ENCODE measurements at regions of chr2 and their contacts with region 1.

Region 1: DNA sequence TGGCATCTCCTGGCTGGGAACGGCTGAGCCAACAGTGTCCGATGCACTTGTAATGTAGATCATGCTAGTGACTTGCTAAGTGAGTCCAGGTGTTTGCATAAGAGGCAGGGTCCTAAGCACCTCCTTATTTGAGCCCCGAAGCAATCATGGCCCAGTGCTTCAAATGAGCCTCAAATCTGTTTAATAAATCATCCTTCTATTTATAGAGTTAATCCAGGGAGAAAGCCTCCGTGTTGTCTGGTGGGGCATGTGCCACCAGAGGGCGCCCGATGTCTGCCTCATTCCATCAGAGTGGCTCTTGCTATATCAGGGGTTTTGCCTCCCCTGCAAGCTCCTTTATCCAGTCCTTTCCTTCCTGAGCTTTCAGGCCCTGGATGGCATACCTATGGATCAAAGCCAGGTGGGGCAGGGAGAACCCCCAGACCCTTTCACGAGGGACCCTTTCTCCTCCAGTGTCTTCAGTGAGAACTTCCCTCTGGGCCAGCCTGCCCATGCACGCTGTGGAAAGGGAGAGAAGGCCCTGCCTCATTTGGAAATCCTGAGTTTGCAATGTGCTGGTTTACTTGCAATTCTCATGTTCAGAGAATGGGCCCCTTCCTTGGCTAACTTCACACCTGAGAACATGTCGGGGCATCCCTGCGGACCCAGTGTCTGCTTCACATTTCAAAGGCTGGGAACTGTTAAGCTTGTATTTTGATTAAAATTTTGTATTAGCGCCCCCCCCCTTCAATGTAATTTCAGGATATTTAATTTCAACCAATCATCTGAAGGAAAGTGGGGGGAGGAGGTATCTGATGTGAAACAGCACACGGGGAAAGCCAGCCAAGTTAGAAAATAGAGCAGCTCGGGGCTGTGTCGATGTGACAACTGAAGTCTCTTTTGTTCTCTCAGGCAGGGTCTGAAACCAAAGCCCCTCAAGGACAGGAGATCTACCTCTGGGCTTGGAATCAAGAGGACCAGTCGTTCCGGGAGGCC is 39.7 kb downstream of the RDH14 start:
- DNase-seq: peak; percentile 63 to 93
- H3K4me3 ChIP-seq: no peak overlapping the region
- H3K27ac ChIP-seq: no peak overlapping the region
- H3K4me1 ChIP-seq: peaks cover 0 to 3% (median 0%) of the 10 kb centered on the region in 4 experiments; a peak in 4 of 7 replicates
- H3K27me3 ChIP-seq: no peaks in the 10 kb centered on the region
- CTCF ChIP-seq: peak; percentile 79 to 91 (median 85)
- EP300 ChIP-seq: no peak
- POLR2A ChIP-seq: no peak
- RAD21 ChIP-seq: peak; percentile 97 to 99

Region 2: GRCh38 chr2:18387441-18388206 is 133.1 kb before region 1 on chr2:
- CTCF ChIA-PET with region 1: interaction called, 24 read pairs
- POLR2A ChIA-PET with region 1: no interaction called
- DNase-seq: peak; percentile 61 to 92
- H3K4me3 ChIP-seq: no peak overlapping the region
- H3K27ac ChIP-seq: no peak overlapping the region
- H3K4me1 ChIP-seq: no peaks in the 10 kb centered on the region
- H3K27me3 ChIP-seq: no peaks in the 10 kb centered on the region
- CTCF ChIP-seq: peak; percentile 76 to 83 (median 80)
- EP300 ChIP-seq: no peak
- POLR2A ChIP-seq: no peak
- RAD21 ChIP-seq: peak; percentile 83 to 85

Region 3: DNA sequence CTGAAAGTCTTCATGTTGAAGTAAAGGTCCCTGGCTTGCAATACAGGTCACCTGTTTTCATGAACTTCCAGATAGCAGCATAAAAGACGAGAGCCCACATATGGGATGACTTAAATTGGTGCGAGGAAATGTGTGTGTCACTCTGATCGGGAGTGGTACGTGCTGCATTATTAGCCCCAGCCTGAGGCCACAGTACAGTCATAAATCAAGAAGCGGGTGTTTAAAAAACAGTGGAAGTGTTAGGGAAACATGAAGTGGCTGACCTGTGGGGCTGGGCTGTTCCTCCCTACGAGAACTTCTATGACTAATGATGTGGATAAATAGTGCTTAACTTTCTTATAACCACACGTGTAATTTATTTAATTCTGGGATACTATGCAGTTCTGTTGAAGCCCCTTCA is 15.4 kb after region 1 on chr2:
- CTCF ChIA-PET with region 1: interaction called, 60 read pairs
- POLR2A ChIA-PET with region 1: no interaction called
- DNase-seq: no peak
- H3K4me3 ChIP-seq: no peak overlapping the region
- H3K27ac ChIP-seq: no peak overlapping the region
- H3K4me1 ChIP-seq: no peaks in the 10 kb centered on the region
- H3K27me3 ChIP-seq: no peaks in the 10 kb centered on the region
- CTCF ChIP-seq: no peak
- EP300 ChIP-seq: no peak
- POLR2A ChIP-seq: no peak
- RAD21 ChIP-seq: no peak

Region 4: GRCh38 chr2:18560031-18560796 is 39.5 kb after region 1 on chr2 and contains the start of gene RDH14:
- CTCF ChIA-PET with region 1: interaction called, 17 read pairs
- POLR2A ChIA-PET with region 1: interaction called, 3 read pairs
- DNase-seq: peak; percentile 86 to 96
- H3K4me3 ChIP-seq: peak within 1 kb of the TSS; percentile 77 to 88 (median 80)
- H3K27ac ChIP-seq: peak within 1 kb of the TSS; percentile 82; the same call in 1 of the 2 replicates
- H3K4me1 ChIP-seq: peaks cover 0 to 10% (median 3%) of the 10 kb centered on the region in 4 experiments; a peak in 4 of 7 replicates
- H3K27me3 ChIP-seq: no peaks in the 10 kb centered on the region
- CTCF ChIP-seq: 0 out of 4 replicates have a peak, but pooled peaks of 1 of the 3 experiments have one; percentile 17
- EP300 ChIP-seq: no peak
- POLR2A ChIP-seq: peak; percentile 30 to 70
- RAD21 ChIP-seq: no peak; a peak in 1 of 4 replicates
- total RNA-seq, gene RDH14: 19.5 and 23.6 TPM in 2 replicates

Region 5: GRCh38 chr2:18741895-18742732 is 221.4 kb after region 1 on chr2:
- CTCF ChIA-PET with region 1: interaction called, 52 read pairs
- POLR2A ChIA-PET with region 1: no interaction called
- DNase-seq: no peak
- H3K4me3 ChIP-seq: no peak overlapping the region
- H3K27ac ChIP-seq: no peak overlapping the region
- H3K4me1 ChIP-seq: peaks cover 0 to 3% (median 1%) of the 10 kb centered on the region in 4 experiments; a peak in 4 of 7 replicates
- H3K27me3 ChIP-seq: no peaks in the 10 kb centered on the region
- CTCF ChIP-seq: peak; percentile 40 to 42 (median 41); a peak in 3 of 4 replicates
- EP300 ChIP-seq: no peak
- POLR2A ChIP-seq: no peak
- RAD21 ChIP-seq: peak; percentile 47 to 53

Region 6: GRCh38 chr2:19355931-19356544 is 835.3 kb after region 1 on chr2:
- CTCF ChIA-PET with region 1: interaction called, 11 read pairs
- POLR2A ChIA-PET with region 1: no interaction called
- DNase-seq: no peak
- H3K4me3 ChIP-seq: peak overlapping the region in 2 of 4 experiments; percentile 14 to 59; a peak in 3 of 8 replicates
- H3K27ac ChIP-seq: no peak overlapping the region
- H3K4me1 ChIP-seq: peaks cover 9 to 48% (median 25%) of the 10 kb centered on the region in 4 experiments
- H3K27me3 ChIP-seq: peaks cover 96 to 99% (median 98%) of the 10 kb centered on the region in 4 experiments
- CTCF ChIP-seq: no peak
- EP300 ChIP-seq: no peak
- POLR2A ChIP-seq: no peak
- RAD21 ChIP-seq: no peak